ENCODE measurements at regions of chr4 and their contacts with region 1.

Region 1: GRCh38 chr4:77600521-77601451 is 4.8 kb upstream of the CXCL13 start:
- DNase-seq: no peak
- H3K4me3 ChIP-seq: no peak overlapping the region
- H3K27ac ChIP-seq: no peak overlapping the region
- H3K27me3 ChIP-seq: no peaks in the 10 kb centered on the region
- CTCF ChIP-seq: peak; percentile 88

Region 2: DNA sequence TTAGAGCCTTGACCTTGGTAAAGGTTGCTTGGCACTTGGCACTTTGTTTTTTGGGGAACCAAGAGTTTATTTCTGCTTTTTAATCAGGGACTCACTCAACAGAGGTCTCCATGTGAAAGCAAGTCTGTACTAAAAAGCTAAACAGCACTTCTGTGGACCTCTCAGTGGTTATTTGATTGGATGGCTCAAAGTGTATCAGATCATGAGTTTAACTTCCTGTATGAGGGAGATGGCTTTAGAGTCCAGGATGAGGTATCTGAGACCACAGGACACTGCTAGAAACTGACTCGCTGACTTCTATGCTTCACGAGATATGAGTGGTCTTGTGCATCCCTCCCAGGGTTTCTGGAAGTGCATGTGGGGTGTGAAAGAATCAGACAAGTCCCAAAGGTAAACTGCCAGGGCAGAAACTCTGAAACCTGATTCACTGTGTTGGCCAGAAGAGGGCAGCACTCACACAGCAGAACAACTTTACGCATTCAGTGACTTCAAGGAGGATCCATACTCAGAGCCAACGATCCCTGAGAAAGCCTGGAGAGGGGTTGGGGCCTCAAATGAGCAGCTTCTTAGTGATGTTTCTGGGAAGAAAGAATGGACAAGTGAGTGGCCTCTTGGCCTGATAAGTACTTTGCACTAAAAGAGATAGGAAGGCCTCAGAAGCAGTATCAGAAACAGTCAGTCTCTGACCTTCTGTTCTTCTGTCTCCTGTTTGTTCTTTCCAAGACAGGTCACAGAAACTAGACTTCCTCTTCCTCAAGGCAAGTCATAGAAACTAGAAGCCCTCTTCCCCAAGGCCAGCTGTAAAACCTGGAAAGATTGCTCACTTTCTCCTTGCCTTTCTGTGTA is 215.4 kb before region 1 on chr4:
- CTCF ChIA-PET with region 1: interaction called, 86 read pairs
- POLR2A ChIA-PET with region 1: no interaction called
- DNase-seq: peak; percentile 34
- H3K4me3 ChIP-seq: no peak overlapping the region
- H3K27ac ChIP-seq: no peak overlapping the region
- H3K27me3 ChIP-seq: no peaks in the 10 kb centered on the region
- CTCF ChIP-seq: peak; percentile 84

Region 3: GRCh38 chr4:77579406-77580076 is 21.2 kb before region 1 on chr4:
- CTCF ChIA-PET with region 1: interaction called, 15 read pairs
- POLR2A ChIA-PET with region 1: no interaction called
- DNase-seq: peak; percentile 18
- H3K4me3 ChIP-seq: no peak overlapping the region
- H3K27ac ChIP-seq: no peak overlapping the region
- H3K27me3 ChIP-seq: no peaks in the 10 kb centered on the region
- CTCF ChIP-seq: no peak

Region 4: GRCh38 chr4:77613267-77613666 is 12.5 kb after region 1 on chr4:
- CTCF ChIA-PET with region 1: interaction called, 24 read pairs
- POLR2A ChIA-PET with region 1: no interaction called
- DNase-seq: no peak
- H3K4me3 ChIP-seq: no peak overlapping the region
- H3K27ac ChIP-seq: no peak overlapping the region
- H3K27me3 ChIP-seq: peaks cover 5% of the 10 kb centered on the region
- CTCF ChIP-seq: no peak

Region 5: DNA sequence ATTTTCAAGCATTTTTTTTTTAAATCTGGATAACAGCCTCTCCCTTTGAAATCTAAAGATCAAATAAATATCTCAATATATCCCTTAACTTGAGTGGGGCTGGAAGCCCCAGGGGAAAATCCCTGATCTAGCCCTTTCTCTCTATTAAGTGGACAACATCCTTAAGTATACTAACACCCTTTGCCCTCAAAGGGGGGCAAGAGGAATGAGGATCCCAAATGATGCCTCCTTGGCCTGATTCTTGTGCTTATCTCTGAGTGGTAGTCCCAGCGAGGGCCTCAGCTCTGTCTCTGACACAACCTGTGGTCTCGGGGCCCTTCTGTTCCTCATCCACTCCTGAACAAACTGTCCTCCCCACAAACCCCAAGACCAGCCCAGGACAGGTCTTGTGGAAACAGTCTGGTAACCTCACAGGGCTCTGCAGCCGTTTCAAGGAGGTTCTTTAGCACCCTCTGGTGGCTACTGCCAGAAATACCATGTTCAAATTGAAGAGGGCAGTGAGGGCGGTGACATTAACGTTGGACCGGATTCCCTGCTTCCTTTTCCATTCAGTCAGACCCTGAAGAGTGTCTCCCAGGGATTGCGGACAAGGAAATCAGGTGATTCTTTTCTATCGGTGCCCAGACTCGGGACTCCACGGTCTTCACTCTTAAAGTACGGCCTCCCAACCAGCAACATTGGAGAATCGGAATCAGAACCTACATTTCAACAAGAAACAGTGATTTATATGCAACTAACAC is 17.8 kb after region 1 on chr4:
- CTCF ChIA-PET with region 1: interaction called, 24 read pairs
- POLR2A ChIA-PET with region 1: no interaction called
- DNase-seq: peak; percentile 30
- H3K4me3 ChIP-seq: no peak overlapping the region
- H3K27ac ChIP-seq: no peak overlapping the region
- H3K27me3 ChIP-seq: peaks cover 16% of the 10 kb centered on the region
- CTCF ChIP-seq: peak; percentile 88

Measured in AG04450 (cell line).